ENCODE measurements at regions of chr18 and their contacts with region 1.

Region 1: GRCh38 chr18:10560450-10561045 is 34.7 kb downstream of the NAPG start:
- DNase-seq: peak; percentile 80
- ATAC-seq: peak; percentile 74 to 78

Region 2: DNA sequence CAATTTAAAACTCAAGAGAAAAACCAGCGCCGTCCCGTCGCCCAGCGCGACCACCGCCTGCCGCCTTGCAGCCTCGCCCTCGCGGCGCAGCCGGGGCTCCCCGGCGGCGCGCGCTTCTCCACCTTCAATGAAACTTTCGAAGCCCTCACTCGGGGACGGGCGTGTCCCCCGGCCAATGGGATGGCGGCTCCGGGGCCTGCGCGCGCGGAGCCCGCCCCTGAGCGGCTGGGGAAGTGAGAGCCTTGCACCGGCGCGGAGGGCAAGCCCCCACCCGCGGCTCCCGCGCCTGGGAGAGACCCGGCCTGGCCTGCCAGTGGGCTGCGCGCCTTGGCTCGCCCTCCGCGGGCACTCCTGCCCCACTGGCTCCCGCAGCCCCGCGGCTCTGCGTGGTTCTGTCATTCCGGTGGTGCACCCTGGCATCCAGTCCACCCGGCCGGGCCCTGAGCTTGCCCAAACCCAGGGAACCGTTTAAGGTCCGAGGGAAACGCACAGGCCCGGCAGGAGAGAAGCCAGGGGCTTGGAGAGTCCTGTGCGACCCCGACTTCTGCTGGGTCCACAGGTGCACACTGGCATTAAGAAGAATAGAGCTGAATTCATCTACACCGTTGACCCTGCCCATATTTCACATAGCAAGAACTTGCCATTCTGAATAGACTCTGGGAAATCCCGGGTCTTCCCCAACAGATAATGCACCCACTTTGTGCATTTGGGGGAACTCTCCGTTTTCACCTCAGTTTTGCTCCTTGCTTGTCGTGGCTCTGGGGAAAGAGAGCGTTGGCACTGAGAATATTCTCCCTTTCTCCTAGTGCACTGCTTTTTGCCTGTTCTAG is 589.1 kb after region 1 on chr18 and contains the start of gene PIEZO2:
- intact Hi-C with region 1: loop called (anchors 5 to 10 kb)
- DNase-seq: peak; percentile 67
- ATAC-seq: peak; percentile 81 to 95
- total RNA-seq, gene PIEZO2: 1.7 to 2.1 TPM

Region 3: DNA sequence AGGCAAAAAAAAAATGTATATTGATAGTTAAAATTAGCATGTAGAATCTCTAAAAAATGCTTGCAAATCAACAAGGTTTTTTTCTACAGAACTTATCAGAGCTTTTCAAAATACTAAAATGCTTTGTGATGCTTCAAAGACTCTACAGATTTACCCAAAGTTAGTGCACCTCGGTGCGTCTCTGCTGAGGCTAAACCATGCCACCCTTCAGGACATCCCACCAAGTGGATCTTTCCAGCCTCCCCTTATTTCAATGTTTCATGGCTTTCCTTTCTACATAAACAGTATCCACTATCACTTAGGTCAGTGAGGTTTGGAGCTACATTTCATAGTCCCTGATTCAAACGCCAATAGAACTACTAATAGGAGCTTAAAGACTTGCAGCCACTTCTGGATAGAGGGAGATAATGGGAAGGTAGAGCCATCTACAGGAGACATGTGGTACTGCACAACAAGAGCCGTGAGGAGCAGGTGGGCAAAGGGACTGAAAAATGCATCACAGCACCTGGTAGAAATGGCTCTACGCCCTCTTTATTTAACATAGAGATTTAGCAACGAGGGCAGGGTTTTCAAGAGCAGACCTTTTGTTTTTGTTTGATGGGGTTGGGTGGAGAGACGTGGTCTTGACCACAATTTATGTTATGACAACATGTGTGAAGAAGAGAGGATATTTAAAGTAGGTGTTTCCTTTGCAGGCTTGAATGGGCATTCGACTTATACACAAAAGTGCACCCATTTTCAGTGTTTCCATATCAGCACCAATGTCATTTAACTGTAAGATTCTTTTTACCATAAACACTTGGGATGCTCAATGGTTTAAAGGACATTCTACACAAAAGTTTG is 992.8 kb after region 1 on chr18:
- intact Hi-C with region 1: loop called in 1 of 2 experiments (anchors 10 kb)
- DNase-seq: no peak
- ATAC-seq: peak; percentile 41 to 65